ENCODE measurements at regions of chr17 and their contacts with region 1.

Region 1: DNA sequence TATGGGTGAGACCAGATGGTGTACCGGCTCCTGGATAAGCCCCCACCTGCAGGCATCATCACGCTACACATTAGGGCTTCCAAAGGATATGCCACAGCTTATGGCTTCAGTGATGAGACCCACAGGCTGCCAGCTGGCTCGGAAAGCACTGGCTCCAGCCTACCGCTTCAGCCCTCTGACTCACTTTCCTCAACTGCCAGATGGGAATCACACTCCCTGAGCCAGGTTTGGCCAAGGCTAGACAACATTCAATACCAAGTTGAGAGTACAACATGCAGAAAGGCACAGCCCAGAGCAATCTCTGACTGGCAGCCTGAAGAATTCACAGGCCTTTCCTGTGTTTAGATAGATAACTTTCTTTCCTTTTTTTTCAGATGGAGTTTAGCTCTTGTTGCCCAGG is 10.3 kb downstream of the CENPV start:
- DNase-seq: no peak
- ATAC-seq: peak; percentile 10; the same call in 2 of the 3 replicates
- H3K4me3 ChIP-seq: no peak overlapping the region
- H3K27ac ChIP-seq: no peak overlapping the region
- H3K4me1 ChIP-seq: no peaks in the 10 kb centered on the region
- H3K27me3 ChIP-seq: no peaks in the 10 kb centered on the region
- CTCF ChIP-seq: no peak
- EP300 ChIP-seq: no peak
- POLR2A ChIP-seq: peak in 1 of 2 experiments; percentile 37; a peak in 1 of 4 replicates
- RAD21 ChIP-seq: no peak

Region 2: GRCh38 chr17:16269658-16270057 is 73.3 kb before region 1 on chr17:
- CTCF ChIA-PET with region 1: no interaction called
- POLR2A ChIA-PET with region 1: no interaction called
- in situ Hi-C with region 1: no loop called
- intact Hi-C with region 1: no loop called
- DNase-seq: no peak
- ATAC-seq: no peak
- H3K4me3 ChIP-seq: no peak overlapping the region
- H3K27ac ChIP-seq: no peak overlapping the region
- H3K4me1 ChIP-seq: no peaks in the 10 kb centered on the region; the same call in 1 of the 2 replicates
- H3K27me3 ChIP-seq: no peaks in the 10 kb centered on the region
- CTCF ChIP-seq: no peak
- EP300 ChIP-seq: no peak
- POLR2A ChIP-seq: no peak
- RAD21 ChIP-seq: no peak

Region 3: DNA sequence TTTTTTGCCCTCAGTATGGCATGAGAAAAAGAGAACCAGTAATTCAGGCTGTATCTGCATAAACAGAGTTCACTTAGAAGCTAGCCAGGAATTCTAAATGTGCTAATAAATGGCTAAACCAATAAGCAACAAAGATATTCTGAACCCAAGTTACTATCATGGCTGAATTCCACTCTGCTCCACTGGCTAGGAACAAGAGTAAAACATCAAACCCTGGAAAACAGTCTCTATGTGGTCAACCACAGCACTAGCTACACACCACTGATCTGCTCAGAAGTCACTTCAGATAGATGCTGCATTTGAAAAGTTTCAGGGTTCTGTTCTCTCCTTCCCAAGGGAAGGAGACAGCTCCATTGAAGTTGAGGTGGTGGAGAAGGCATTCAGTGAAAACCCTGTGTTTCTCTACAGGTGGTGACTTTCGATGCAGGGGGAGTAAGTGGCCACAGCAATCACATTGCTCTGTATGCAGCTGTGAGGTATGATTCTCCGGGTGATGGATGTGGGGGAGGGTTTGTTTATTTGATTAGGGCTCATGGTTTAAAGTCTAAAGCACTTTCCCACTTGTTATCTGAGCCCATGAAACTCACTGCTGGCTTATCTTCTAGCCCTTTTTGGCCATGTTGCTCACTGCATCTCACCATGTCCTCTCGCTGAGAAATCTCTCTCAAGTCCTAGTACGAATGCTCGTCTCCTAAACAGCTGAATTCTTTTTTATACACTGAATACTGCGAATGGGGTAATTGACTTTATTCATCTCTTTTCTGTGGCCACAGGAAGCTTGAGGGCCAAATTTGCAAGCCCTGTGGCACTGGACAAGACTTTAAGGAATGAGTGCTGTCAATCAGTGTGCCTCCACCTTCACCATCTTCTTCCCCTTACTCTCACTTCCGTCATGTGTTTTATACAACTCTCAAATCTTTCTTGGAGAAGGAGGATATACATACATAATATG is 29.6 kb before region 1 on chr17:
- CTCF ChIA-PET with region 1: no interaction called
- POLR2A ChIA-PET with region 1: interaction called, 11 read pairs
- in situ Hi-C with region 1: no loop called
- intact Hi-C with region 1: no loop called
- DNase-seq: peak; percentile 94
- ATAC-seq: peak; percentile 97
- H3K4me3 ChIP-seq: peak overlapping the region in 2 of 3 experiments; percentile 1 to 35; a peak in 2 of 6 replicates
- H3K27ac ChIP-seq: peak overlapping the region; percentile 97
- H3K4me1 ChIP-seq: peaks cover 55% of the 10 kb centered on the region
- H3K27me3 ChIP-seq: no peaks in the 10 kb centered on the region
- CTCF ChIP-seq: peak; percentile 11; the same call in 1 of the 2 replicates
- EP300 ChIP-seq: peak in 1 of 2 experiments; percentile 76; a peak in 3 of 4 replicates
- POLR2A ChIP-seq: peak; percentile 44 to 55; a peak in 2 of 4 replicates
- RAD21 ChIP-seq: 0 out of 2 replicates have a peak, but pooled peaks have one; percentile 41

Region 4: GRCh38 chr17:16329519-16330271 is 13.3 kb before region 1 on chr17:
- CTCF ChIA-PET with region 1: no interaction called
- POLR2A ChIA-PET with region 1: interaction called, 10 read pairs
- in situ Hi-C with region 1: no loop called
- intact Hi-C with region 1: no loop called
- DNase-seq: no peak
- ATAC-seq: peak; percentile 65
- H3K4me3 ChIP-seq: no peak overlapping the region
- H3K27ac ChIP-seq: peak overlapping the region; percentile 8
- H3K4me1 ChIP-seq: peaks cover 12% of the 10 kb centered on the region
- H3K27me3 ChIP-seq: no peaks in the 10 kb centered on the region
- CTCF ChIP-seq: no peak
- EP300 ChIP-seq: no peak
- POLR2A ChIP-seq: no peak
- RAD21 ChIP-seq: no peak